Left ventricle myocardium superior (tissue), 1 donor: ENCODE measurements at regions of chr1 and their contacts with region 1.

Region 1: GRCh38 chr1:245045087-245045881 is 109.5 kb upstream of the KIF26B start:
- DNase-seq: peak; percentile 37
- ATAC-seq: peak; percentile 57

Region 2: DNA sequence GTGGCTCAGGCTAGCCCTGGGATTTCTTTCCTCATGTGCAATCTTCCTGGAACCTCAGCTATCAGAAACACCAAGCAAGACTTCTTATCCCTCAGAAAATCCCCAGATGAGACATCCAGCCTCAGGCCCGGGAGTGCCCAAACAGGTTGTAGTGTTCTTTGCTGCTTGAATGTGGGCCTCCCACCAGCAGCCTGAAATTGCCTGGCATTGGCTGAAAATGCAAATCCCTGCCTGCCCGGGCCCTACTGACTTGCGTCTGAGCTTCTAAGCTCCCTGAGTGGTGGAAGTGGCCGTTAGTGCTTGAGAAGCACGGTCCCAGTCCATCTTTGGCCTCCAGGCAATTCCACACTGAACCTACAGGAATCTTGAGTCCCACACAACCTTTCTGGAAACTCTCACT is 847.4 kb before region 1 on chr1:
- intact Hi-C with region 1: no loop called
- DNase-seq: no peak
- ATAC-seq: no peak

Region 3: GRCh38 chr1:244801246-244801645 is 244.0 kb before region 1 on chr1:
- intact Hi-C with region 1: loop called (anchors 5 kb)
- DNase-seq: no peak
- ATAC-seq: peak; percentile 61

Region 4: GRCh38 chr1:244854865-244855578 is 190.3 kb before region 1 on chr1:
- intact Hi-C with region 1: loop called (anchors 10 kb)
- DNase-seq: no peak
- ATAC-seq: no peak